Activated CD8-positive, alpha-beta T cell treated with anti-CD3 and anti-CD28 coated beads for 36 hours (primary cell): ENCODE measurements at regions of chr13 and their contacts with region 1.

Region 1: DNA sequence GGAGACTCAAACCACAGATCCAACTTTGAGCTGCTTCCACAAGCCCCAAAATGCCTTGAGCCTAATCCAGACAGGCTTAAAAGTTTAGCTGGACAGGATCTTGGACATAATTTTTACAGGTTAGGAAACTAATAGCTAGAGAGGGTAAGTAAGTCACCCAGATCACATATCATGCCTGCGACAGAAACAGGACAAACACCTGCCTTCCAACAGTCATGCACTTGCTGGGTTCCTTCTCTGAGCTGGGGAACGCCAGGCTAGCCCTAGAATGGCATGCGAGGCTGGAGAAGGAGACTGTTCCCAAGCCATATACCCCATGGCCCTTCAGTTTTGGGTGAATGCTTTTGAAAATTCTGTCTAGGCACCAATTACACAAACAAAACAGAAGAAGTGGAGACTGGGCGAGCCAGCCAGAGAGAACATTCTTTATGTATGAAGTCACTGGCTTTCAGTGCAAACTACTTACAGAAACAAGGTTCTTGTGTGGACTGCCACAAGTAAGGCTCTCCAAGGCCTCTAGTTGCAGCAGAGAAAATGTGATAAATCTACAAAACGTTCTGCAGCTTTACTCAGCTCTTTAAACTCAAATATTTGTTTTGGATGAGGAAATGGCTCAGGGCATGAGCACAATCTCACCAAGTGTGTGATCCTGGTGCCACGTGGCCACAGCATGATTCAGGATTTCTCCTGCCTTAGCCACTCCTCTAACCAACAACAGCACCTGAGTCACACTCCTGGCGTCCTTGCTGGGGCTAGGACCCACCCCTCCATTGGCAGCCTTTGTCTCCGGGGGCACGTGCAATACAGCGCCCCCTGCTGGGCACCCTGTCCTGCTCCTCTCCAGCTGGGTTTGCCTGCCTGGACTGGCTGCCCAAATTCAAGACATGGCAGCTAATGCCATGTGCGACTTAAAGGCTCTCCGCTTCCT is 73.4 kb upstream of the UBL3 start:
- DNase-seq: peak; percentile 79
- ATAC-seq: peak; percentile 97
- H3K4me3 Mint-ChIP-seq: no peak overlapping the region
- H3K27ac Mint-ChIP-seq: no peak overlapping the region
- H3K4me1 Mint-ChIP-seq: peaks cover 15% of the 10 kb centered on the region
- H3K27me3 Mint-ChIP-seq: no peaks in the 10 kb centered on the region
- CTCF ChIP-seq: peak; percentile 94

Region 2: DNA sequence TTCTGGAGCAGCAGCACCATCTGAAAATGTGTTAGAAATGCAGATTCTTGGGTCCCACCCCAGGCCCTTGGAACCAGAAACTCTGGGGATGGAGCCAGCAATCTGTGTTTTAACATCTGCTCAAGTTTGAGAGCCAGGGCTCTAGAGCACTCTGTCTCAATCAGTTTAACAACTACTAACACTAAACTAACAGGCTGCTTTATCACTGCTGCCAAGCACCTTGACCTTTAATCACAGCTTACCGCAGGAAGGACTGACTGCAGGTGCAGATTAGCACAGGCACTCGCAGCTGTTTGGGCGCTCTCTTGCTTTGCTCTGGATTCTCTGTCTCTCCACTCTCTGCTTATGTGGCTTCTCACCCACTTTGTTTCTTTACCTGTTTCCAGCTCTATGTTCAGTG is 940.2 kb before region 1 on chr13:
- CTCF ChIA-PET with region 1: no interaction called
- POLR2A ChIA-PET with region 1: no interaction called
- intact Hi-C with region 1: no loop called
- DNase-seq: no peak
- ATAC-seq: no peak
- H3K4me3 Mint-ChIP-seq: no peak overlapping the region
- H3K27ac Mint-ChIP-seq: no peak overlapping the region
- H3K4me1 Mint-ChIP-seq: no peaks in the 10 kb centered on the region
- H3K27me3 Mint-ChIP-seq: peaks cover 3% of the 10 kb centered on the region
- CTCF ChIP-seq: no peak

Region 3: GRCh38 chr13:29840585-29840984 is 83.2 kb before region 1 on chr13:
- CTCF ChIA-PET with region 1: interaction called, 17 read pairs
- POLR2A ChIA-PET with region 1: no interaction called
- intact Hi-C with region 1: no loop called
- DNase-seq: no peak
- ATAC-seq: no peak
- H3K4me3 Mint-ChIP-seq: no peak overlapping the region
- H3K27ac Mint-ChIP-seq: no peak overlapping the region
- H3K4me1 Mint-ChIP-seq: peaks cover 58% of the 10 kb centered on the region
- H3K27me3 Mint-ChIP-seq: no peaks in the 10 kb centered on the region
- CTCF ChIP-seq: no peak

Region 4: GRCh38 chr13:29902101-29902952 is 21.5 kb before region 1 on chr13:
- CTCF ChIA-PET with region 1: interaction called, 10 read pairs
- POLR2A ChIA-PET with region 1: interaction called, 4 read pairs
- intact Hi-C with region 1: no loop called
- DNase-seq: peak; percentile 52
- ATAC-seq: peak; percentile 51
- H3K4me3 Mint-ChIP-seq: peak overlapping the region; percentile 50
- H3K27ac Mint-ChIP-seq: peak overlapping the region; percentile 13
- H3K4me1 Mint-ChIP-seq: peaks cover 19% of the 10 kb centered on the region
- H3K27me3 Mint-ChIP-seq: no peaks in the 10 kb centered on the region
- CTCF ChIP-seq: no peak

Region 5: DNA sequence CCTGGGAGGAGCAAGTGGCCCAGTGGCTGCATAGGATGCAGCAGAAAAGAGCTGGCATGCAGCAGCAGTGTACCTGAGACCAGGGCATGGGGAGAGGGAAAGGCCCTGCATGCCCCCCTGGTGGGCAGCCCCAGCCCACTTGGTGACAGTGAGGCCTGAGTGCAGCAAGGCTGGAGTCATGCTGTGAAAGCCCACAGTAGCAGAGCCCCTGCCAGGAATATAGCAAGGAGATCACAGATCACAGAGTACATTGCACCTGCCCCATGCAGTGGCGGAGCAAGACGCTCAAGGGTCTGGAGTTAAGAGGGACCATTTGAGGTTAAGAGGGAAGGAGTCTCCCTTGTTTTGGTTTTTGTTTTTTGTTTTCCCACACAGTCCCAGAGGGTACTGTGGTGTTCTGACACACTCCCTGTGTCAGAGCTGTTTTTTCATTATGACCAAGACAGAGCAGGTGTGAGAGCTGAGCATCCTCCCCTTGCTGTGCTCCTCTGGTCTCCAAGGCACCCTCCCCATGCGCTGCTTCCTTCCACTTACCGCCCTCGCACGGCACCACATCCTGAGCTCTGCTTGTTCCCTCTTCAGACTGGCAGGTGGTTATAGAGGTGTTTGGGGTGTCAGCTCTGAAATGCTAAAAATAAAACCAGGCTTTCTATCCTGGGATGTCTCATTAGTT is 11.6 kb after region 1 on chr13:
- CTCF ChIA-PET with region 1: interaction called, 69 read pairs
- POLR2A ChIA-PET with region 1: interaction called, 4 read pairs
- intact Hi-C with region 1: no loop called
- DNase-seq: peak; percentile 93
- ATAC-seq: peak; percentile 95
- H3K4me3 Mint-ChIP-seq: peak overlapping the region; percentile 67
- H3K27ac Mint-ChIP-seq: peak overlapping the region; percentile 81
- H3K4me1 Mint-ChIP-seq: peaks cover 40% of the 10 kb centered on the region
- H3K27me3 Mint-ChIP-seq: no peaks in the 10 kb centered on the region
- CTCF ChIP-seq: no peak

Region 6: DNA sequence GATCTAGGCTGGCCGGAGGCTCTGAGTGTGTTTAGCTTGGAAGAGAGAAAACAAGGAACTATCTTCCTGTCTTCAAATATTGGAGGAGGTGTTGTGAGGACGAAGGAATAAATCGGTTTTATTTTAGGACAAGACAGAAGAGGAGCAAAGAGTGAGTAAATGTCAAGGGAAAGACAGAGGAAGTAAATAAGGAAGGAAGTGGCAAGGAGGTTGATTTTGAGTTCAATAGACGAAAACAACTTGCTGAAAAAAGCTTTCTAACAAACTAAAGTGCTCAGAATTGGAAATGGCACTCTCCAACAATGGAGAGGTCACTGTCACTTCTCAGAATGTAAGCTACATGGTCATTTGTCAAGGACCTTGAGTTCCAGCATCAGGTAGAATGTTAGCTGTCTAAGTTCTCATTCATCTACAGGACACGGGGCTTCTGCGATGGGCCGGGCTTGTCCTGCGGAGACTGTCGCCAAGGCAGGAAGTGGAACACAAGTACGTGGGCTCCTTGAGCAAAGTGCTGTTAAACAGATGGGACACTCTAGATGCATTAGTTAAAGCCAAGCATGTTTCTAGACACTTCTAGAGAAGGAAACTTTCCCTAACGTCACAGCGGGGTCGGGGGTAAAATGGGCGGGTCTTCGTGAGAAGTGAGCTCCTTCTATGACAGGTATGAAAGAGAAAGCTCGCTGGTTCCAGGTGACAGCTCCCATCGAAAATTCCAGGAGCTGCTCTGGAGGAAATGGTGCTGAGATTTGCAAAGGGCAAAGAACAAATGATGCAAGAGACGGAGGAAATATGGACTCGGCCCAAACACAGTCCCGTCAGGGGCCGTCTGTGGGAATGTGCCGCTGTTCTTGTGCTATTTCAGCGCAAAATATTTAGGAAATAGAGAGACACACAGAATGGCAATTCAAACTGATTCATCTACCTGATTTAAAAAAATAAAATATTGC is 30.5 kb after region 1 on chr13:
- CTCF ChIA-PET with region 1: interaction called, 12 read pairs
- POLR2A ChIA-PET with region 1: no interaction called
- intact Hi-C with region 1: no loop called
- DNase-seq: peak; percentile 69
- ATAC-seq: peak; percentile 96
- H3K4me3 Mint-ChIP-seq: peak overlapping the region; percentile 61
- H3K27ac Mint-ChIP-seq: peak overlapping the region; percentile 92
- H3K4me1 Mint-ChIP-seq: peaks cover 33% of the 10 kb centered on the region
- H3K27me3 Mint-ChIP-seq: no peaks in the 10 kb centered on the region
- CTCF ChIP-seq: no peak

Region 7: GRCh38 chr13:30020726-30021312 is 97.0 kb after region 1 on chr13:
- CTCF ChIA-PET with region 1: no interaction called
- POLR2A ChIA-PET with region 1: no interaction called
- intact Hi-C with region 1: no loop called
- DNase-seq: no peak
- ATAC-seq: no peak
- H3K4me3 Mint-ChIP-seq: no peak overlapping the region
- H3K27ac Mint-ChIP-seq: no peak overlapping the region
- H3K4me1 Mint-ChIP-seq: no peaks in the 10 kb centered on the region
- H3K27me3 Mint-ChIP-seq: no peaks in the 10 kb centered on the region
- CTCF ChIP-seq: no peak

Region 8: DNA sequence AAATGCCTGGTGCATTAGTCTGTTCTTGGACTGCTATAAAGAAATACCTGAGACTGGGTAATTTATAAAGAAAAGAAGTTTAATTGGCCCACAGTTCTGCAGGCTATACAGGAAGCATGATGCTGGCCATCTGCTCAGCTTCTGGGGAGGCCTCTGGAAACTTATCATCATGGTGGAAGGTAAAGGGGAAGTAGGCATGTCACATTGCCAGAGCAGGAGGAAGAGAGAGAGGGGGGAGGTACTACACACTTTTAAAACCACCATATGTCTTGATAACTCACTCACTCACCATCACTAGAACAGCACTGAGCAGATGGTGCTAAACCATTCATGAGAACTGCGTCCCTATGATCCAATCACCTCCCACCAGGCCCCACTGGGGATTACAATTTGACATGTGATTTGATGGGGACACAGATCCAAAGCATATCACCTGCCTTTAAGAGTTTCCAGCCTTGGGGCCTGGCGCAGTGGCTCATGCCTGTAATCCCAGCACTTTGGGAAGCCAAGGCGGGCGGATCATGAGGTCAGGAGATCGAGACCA is 164.6 kb after region 1 on chr13:
- CTCF ChIA-PET with region 1: no interaction called
- POLR2A ChIA-PET with region 1: no interaction called
- intact Hi-C with region 1: no loop called
- DNase-seq: no peak
- ATAC-seq: no peak
- H3K4me3 Mint-ChIP-seq: no peak overlapping the region
- H3K27ac Mint-ChIP-seq: no peak overlapping the region
- H3K4me1 Mint-ChIP-seq: peaks cover 2% of the 10 kb centered on the region
- H3K27me3 Mint-ChIP-seq: no peaks in the 10 kb centered on the region
- CTCF ChIP-seq: no peak